ENCODE measurements at regions of chr18 and their contacts with region 1.

Region 1: DNA sequence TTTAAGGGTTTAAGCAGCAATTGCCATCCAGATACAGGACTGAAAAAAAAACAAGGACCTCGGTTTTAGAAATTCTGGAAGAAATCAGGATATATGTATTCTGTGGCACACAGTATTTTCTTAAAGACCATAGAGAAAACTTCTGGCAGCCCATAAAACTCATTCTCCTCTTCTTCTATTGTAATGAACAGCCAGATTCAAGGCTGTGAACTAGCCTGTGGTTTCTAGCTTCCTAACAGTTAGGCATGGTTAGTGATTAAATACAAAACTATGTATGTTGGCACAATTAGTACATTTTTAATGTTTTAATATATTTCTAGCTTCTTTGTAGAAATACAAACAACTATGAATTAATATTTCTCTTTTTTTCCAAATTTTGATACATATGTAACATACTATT is 555.7 kb downstream of the DSC3 start:
- DNase-seq: no peak
- ATAC-seq: peak; percentile 46; the same call in 2 of the 3 replicates
- H3K4me3 ChIP-seq: no peak overlapping the region
- H3K27ac ChIP-seq: no peak overlapping the region
- H3K4me1 ChIP-seq: no peaks in the 10 kb centered on the region
- H3K27me3 ChIP-seq: no peaks in the 10 kb centered on the region
- CTCF ChIP-seq: no peak
- EP300 ChIP-seq: no peak
- POLR2A ChIP-seq: no peak
- RAD21 ChIP-seq: no peak

Region 2: GRCh38 chr18:30376515-30376914 is 110.3 kb before region 1 on chr18:
- CTCF ChIA-PET with region 1: no interaction called
- POLR2A ChIA-PET with region 1: no interaction called
- RAD21 ChIA-PET with region 1: no interaction called
- SMC1A ChIA-PET with region 1: no interaction called
- in situ Hi-C with region 1: no loop called
- intact Hi-C with region 1: no loop called
- DNase-seq: no peak
- ATAC-seq: peak; percentile 77
- H3K4me3 ChIP-seq: no peak overlapping the region
- H3K27ac ChIP-seq: no peak overlapping the region
- H3K4me1 ChIP-seq: no peaks in the 10 kb centered on the region
- H3K27me3 ChIP-seq: no peaks in the 10 kb centered on the region
- CTCF ChIP-seq: peak in 2 of 3 experiments; percentile 11 to 46; a peak in 2 of 6 replicates
- EP300 ChIP-seq: no peak
- POLR2A ChIP-seq: no peak
- RAD21 ChIP-seq: no peak

Region 3: GRCh38 chr18:30409120-30409519 is 77.7 kb before region 1 on chr18:
- CTCF ChIA-PET with region 1: no interaction called
- POLR2A ChIA-PET with region 1: no interaction called
- RAD21 ChIA-PET with region 1: no interaction called
- SMC1A ChIA-PET with region 1: no interaction called
- in situ Hi-C with region 1: no loop called
- intact Hi-C with region 1: no loop called
- DNase-seq: no peak
- ATAC-seq: no peak
- H3K4me3 ChIP-seq: no peak overlapping the region
- H3K27ac ChIP-seq: no peak overlapping the region
- H3K4me1 ChIP-seq: no peaks in the 10 kb centered on the region
- H3K27me3 ChIP-seq: no peaks in the 10 kb centered on the region
- CTCF ChIP-seq: no peak
- EP300 ChIP-seq: no peak
- POLR2A ChIP-seq: no peak
- RAD21 ChIP-seq: no peak

Region 4: GRCh38 chr18:30446605-30447004 is 40.3 kb before region 1 on chr18:
- CTCF ChIA-PET with region 1: interaction called, 3 read pairs
- POLR2A ChIA-PET with region 1: no interaction called
- RAD21 ChIA-PET with region 1: interaction called, 3 read pairs
- SMC1A ChIA-PET with region 1: interaction called, 14 read pairs
- in situ Hi-C with region 1: no loop called
- intact Hi-C with region 1: no loop called
- DNase-seq: no peak
- ATAC-seq: no peak
- H3K4me3 ChIP-seq: no peak overlapping the region
- H3K27ac ChIP-seq: no peak overlapping the region
- H3K4me1 ChIP-seq: no peaks in the 10 kb centered on the region
- H3K27me3 ChIP-seq: no peaks in the 10 kb centered on the region
- CTCF ChIP-seq: no peak
- EP300 ChIP-seq: no peak
- POLR2A ChIP-seq: no peak
- RAD21 ChIP-seq: no peak

Region 5: DNA sequence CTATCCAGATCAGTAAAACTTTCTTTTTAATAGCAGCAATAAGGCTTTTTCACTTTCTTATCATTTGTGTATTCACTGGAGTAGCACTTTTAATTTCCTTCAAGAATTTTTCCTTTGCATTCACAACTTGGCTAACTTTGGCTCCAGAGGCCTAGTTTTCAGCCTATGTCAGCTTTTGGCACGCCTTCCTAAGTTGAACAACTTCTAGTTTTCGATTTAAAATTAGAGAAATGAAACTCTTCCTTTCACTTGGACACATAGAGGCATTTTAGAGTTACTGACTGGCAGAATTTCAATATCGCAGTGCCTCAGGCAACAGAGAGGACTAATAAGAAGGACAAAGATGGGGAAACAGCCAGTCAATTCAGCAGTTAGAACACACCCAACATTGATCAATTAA is 21.8 kb before region 1 on chr18:
- CTCF ChIA-PET with region 1: interaction called, 3 read pairs
- POLR2A ChIA-PET with region 1: interaction called, 3 read pairs
- RAD21 ChIA-PET with region 1: interaction called, 3 read pairs
- SMC1A ChIA-PET with region 1: interaction called, 12 read pairs
- in situ Hi-C with region 1: no loop called
- intact Hi-C with region 1: no loop called
- DNase-seq: no peak
- ATAC-seq: peak; percentile 45
- H3K4me3 ChIP-seq: no peak overlapping the region
- H3K27ac ChIP-seq: no peak overlapping the region
- H3K4me1 ChIP-seq: no peaks in the 10 kb centered on the region
- H3K27me3 ChIP-seq: no peaks in the 10 kb centered on the region
- CTCF ChIP-seq: no peak
- EP300 ChIP-seq: no peak
- POLR2A ChIP-seq: no peak
- RAD21 ChIP-seq: no peak

Region 6: GRCh38 chr18:30501594-30501993 is 14.7 kb after region 1 on chr18:
- CTCF ChIA-PET with region 1: interaction called, 5 read pairs
- POLR2A ChIA-PET with region 1: no interaction called
- RAD21 ChIA-PET with region 1: interaction called, 13 read pairs
- SMC1A ChIA-PET with region 1: interaction called, 13 read pairs
- in situ Hi-C with region 1: no loop called
- intact Hi-C with region 1: no loop called
- DNase-seq: no peak
- ATAC-seq: peak; percentile 47
- H3K4me3 ChIP-seq: no peak overlapping the region
- H3K27ac ChIP-seq: no peak overlapping the region
- H3K4me1 ChIP-seq: no peaks in the 10 kb centered on the region
- H3K27me3 ChIP-seq: no peaks in the 10 kb centered on the region
- CTCF ChIP-seq: no peak
- EP300 ChIP-seq: no peak
- POLR2A ChIP-seq: no peak
- RAD21 ChIP-seq: no peak

Region 7: DNA sequence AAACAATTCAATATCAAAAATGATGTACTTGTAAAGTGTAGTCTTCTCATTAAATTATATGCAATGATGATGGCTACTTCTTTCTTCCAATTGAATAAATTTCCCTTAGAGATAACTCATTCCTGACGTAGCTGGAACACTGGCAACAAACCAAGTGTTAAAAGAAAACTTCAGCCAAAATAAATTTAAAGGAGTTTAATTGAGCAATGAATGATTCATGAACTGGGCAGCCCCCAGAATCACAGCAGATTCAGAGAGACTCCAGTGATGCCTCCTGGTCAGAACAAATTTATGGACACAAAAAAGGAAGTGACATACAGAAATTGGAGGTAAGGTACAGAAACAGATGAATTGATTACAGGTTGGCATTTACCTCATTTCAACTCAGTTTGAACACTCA is 279.2 kb after region 1 on chr18:
- CTCF ChIA-PET with region 1: no interaction called
- POLR2A ChIA-PET with region 1: no interaction called
- RAD21 ChIA-PET with region 1: no interaction called
- SMC1A ChIA-PET with region 1: no interaction called
- in situ Hi-C with region 1: no loop called
- intact Hi-C with region 1: no loop called
- DNase-seq: no peak
- ATAC-seq: no peak
- H3K4me3 ChIP-seq: no peak overlapping the region
- H3K27ac ChIP-seq: no peak overlapping the region
- H3K4me1 ChIP-seq: no peaks in the 10 kb centered on the region
- H3K27me3 ChIP-seq: no peaks in the 10 kb centered on the region
- CTCF ChIP-seq: no peak
- EP300 ChIP-seq: no peak
- POLR2A ChIP-seq: no peak
- RAD21 ChIP-seq: no peak

Measured in GM12878 (cell line).